ENCODE measurements at regions of chr9 and their contacts with region 1.

Region 1: GRCh38 chr9:9790216-9790872 is 822.5 kb downstream of the PTPRD start:
- DNase-seq: peak in 6 of 10 donors; percentile 12 to 53 (median 20)

Region 2: GRCh38 chr9:9605681-9606080 is 184.7 kb before region 1 on chr9:
- intact Hi-C with region 1: loop called (anchors 1 kb)
- DNase-seq: no peak

Region 3: GRCh38 chr9:9942764-9943424 is 152.6 kb after region 1 on chr9:
- intact Hi-C with region 1: loop called (anchors 10 kb)
- DNase-seq: peak; percentile 47 to 95 (median 79)

Measured in posterior cingulate gyrus (tissue), 11 donors.